Pancreas (tissue), 10 donors: ENCODE measurements at regions of chr1 and their contacts with region 1.

Region 1: GRCh38 chr1:33055210-33056008 is 18.7 kb upstream of the AK2 start:
- DNase-seq: peak in 4 of 6 donors; percentile 51 to 74 (median 64)
- ATAC-seq: peak; percentile 92 to 98 (median 96)
- H3K4me3 ChIP-seq: no peak overlapping the region
- H3K27ac ChIP-seq: peak overlapping the region in 1 of 4 donors; percentile 22
- H3K4me1 ChIP-seq: peaks cover 0 to 6% (median 0%) of the 10 kb centered on the region in 3 donors
- H3K27me3 ChIP-seq: no peaks in the 10 kb centered on the region
- CTCF ChIP-seq: peak; percentile 41 to 56 (median 50)

Region 2: DNA sequence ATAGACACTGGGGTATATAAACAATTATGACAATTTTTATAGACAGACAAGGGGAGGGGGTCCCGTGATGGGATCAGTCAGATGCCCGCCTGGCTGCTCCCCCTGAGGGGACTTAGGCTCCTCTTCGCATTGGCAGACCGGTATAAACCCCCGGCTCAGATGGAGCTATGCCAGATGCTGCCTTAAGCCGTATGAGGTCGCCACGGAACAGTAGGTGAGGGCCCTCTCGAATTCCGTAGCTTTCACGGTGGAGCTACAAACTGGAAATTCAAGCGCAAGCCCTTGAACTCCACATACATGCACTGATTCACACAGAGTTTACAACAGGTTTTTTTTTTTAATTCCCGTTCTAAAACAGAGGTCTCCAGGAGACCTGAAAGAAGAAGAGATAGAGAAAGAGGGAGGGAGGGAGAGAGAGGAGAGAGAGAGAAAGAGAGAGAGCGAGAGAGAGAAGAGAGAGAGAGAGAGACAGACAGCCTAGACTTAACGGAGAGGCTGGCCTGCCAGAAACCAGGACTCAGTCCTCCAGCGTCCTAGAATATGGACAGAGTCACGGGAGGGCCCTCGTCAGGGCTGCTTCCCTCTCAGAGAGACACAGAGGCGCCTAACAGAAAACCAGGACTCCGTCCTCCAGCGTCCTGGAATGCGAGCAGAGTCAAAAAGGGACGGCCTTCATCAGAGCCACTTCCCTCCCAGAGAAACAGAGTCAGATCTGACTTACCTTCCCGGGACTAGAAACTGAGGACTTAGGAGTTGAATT is 129.8 kb before region 1 on chr1:
- intact Hi-C with region 1: loop called in 2 of 3 experiments (anchors 5 to 10 kb)
- DNase-seq: peak in 1 of 6 donors; percentile 31
- ATAC-seq: peak; percentile 43 to 62 (median 59)
- H3K4me3 ChIP-seq: no peak overlapping the region
- H3K27ac ChIP-seq: no peak overlapping the region
- H3K4me1 ChIP-seq: no peaks in the 10 kb centered on the region
- H3K27me3 ChIP-seq: no peaks in the 10 kb centered on the region
- CTCF ChIP-seq: no peak

Region 3: GRCh38 chr1:32933742-32934322 is 121.6 kb before region 1 on chr1:
- intact Hi-C with region 1: loop called in 2 of 3 experiments (anchors 5 to 10 kb)
- DNase-seq: peak in 3 of 6 donors; percentile 28 to 64 (median 33)
- ATAC-seq: peak; percentile 66 to 91 (median 84)
- H3K4me3 ChIP-seq: no peak overlapping the region
- H3K27ac ChIP-seq: peak overlapping the region in 2 of 4 donors; percentile 70 to 74
- H3K4me1 ChIP-seq: peaks cover 0 to 11% (median 7%) of the 10 kb centered on the region in 3 donors
- H3K27me3 ChIP-seq: no peaks in the 10 kb centered on the region
- CTCF ChIP-seq: peak in 1 of 4 donors; percentile 2